A549 (cell line): ENCODE measurements at regions of chr14 and their contacts with region 1.

Region 1: DNA sequence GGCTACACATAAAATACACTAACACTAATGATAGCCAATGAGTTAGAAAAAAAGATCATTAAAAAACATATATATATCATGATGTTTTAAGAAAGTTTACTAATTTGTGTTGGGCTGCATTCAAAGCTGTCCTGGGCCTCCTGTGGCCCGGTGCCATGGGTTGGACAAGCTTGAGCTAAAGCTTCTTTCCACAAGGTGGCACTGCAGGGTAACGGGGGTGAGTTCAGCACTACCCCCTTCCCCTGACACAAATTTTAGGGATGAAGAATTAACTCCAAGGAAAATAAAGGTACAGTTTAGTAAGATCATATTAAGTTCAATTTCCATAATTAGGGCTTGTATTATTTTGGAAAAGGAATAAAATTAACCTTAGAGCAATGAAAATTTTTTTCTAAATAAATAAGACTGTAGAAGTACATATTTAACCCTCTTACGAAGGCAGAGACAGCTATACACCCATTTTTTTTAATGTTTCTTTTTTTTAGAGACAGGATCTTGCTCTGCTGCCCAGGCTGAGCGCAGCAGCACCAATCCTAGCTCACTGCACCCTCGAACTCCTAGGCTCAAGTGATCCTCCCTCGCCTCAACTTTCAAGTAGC is 38.9 kb downstream of the PPP1R13B start:
- DNase-seq: peak; percentile 55 to 70
- ATAC-seq: peak; percentile 92 to 98
- H3K4me3 ChIP-seq: no peak overlapping the region
- H3K27ac ChIP-seq: no peak overlapping the region
- H3K4me1 ChIP-seq: no peaks in the 10 kb centered on the region
- CTCF ChIP-seq: peak; percentile 93
- EP300 ChIP-seq: no peak
- POLR2A ChIP-seq: no peak
- RAD21 ChIP-seq: peak; percentile 94 to 95

Region 2: DNA sequence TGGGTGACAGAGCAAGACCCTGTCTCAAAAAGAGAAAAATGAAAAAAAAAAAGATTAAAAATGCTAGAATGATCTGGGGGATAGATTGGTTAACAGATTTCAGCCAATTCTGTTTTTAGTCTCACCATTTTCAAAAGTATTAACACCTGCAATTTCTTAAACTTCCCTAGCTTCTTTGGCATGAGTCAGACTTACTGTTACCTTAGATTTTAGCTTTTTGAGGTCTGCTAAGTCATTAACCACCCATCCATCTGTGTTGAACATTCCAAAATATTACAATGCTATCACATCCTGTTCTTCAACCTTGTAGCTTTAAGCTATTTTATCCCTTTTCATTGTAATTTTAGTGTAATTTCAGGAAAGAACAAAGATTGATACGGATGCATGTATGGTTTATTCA is 20.4 kb before region 1 on chr14:
- CTCF ChIA-PET with region 1: interaction called, 13 read pairs
- POLR2A ChIA-PET with region 1: no interaction called
- DNase-seq: no peak
- ATAC-seq: no peak
- H3K4me3 ChIP-seq: no peak overlapping the region
- H3K27ac ChIP-seq: no peak overlapping the region
- H3K4me1 ChIP-seq: no peaks in the 10 kb centered on the region
- CTCF ChIP-seq: no peak
- EP300 ChIP-seq: no peak
- POLR2A ChIP-seq: no peak
- RAD21 ChIP-seq: no peak

Region 3: DNA sequence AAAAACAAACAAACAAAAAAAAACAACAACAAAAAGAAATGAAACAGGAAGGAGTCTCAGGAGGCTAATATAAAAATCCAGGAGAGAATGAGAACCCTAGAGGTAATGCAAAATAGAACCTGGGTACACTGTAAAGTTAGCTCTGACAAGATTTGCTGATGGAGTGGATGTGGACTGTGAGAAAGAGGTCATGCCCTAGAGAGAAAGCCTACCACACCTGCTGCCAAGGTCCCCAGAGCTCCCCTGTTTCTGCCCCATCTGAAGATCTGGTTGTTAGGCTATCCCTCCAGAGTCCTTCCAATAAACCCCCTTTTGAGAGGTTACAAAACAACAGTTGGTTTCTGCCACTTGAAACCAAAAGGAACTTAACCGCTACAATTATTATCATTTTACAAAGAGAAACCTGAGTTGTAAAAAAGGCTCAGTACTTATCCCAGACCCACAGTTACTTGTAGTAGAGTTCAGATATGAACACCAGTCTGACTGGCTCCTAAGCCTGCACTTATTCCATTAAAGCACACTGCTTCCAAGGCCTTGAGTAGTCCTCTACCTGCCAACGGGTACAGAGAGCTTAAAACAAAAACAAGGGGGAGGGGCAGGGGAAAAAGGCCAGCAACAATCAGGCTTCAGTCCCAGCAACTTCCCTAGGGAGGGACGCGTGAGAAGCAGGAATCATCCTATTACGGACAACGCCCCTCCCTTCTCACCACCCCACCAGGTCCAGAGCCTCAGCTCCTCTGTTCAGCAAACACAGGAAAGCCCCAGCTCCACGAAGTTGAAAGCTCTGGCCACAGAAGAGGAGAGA is 11.2 kb after region 1 on chr14:
- CTCF ChIA-PET with region 1: interaction called, 27 read pairs
- POLR2A ChIA-PET with region 1: no interaction called
- DNase-seq: no peak
- ATAC-seq: peak in 1 of 2 experiments; percentile 45; a peak in 4 of 6 replicates
- H3K4me3 ChIP-seq: no peak overlapping the region
- H3K27ac ChIP-seq: no peak overlapping the region
- H3K4me1 ChIP-seq: no peaks in the 10 kb centered on the region; the same call in 2 of the 3 replicates
- CTCF ChIP-seq: no peak
- EP300 ChIP-seq: no peak
- POLR2A ChIP-seq: no peak
- RAD21 ChIP-seq: no peak

Region 4: GRCh38 chr14:103840014-103840413 is 31.5 kb after region 1 on chr14:
- CTCF ChIA-PET with region 1: interaction called, 11 read pairs
- POLR2A ChIA-PET with region 1: no interaction called
- DNase-seq: no peak
- ATAC-seq: no peak
- H3K4me3 ChIP-seq: no peak overlapping the region
- H3K27ac ChIP-seq: no peak overlapping the region
- H3K4me1 ChIP-seq: no peaks in the 10 kb centered on the region
- CTCF ChIP-seq: no peak
- EP300 ChIP-seq: no peak
- POLR2A ChIP-seq: no peak
- RAD21 ChIP-seq: no peak

Region 5: DNA sequence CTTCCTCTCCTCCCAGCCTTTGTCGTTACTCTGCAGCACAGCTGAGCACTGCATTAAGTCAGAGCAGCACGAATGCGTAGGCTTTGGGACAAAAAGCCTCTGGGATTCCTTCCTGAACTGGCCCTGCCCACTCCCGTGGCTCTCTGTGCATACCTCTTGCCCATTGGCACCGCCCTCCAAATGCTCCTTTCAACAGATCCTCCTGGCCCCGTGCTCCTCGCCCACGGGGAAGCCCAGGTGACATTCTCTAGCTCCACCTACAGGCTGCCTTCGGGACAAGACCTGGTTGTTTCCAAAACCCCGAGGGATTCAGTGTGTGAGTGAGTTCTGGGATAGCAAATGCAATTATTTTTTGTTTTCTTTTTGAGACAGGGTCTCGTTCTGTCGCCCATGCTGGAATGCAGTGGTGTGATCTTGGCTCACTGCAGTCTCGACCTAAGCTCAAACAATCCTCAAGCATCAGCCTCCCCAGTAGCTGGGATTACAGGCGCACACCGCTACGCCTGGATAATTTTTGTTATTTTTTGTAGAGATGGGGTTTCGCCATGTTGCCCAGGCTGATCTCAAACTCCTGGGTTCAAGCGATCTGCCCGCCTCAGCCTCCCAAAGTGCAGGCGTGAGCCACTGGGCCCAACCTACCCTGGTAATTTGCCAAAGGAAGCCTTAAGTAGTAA is 101.9 kb after region 1 on chr14:
- CTCF ChIA-PET with region 1: interaction called, 120 read pairs
- POLR2A ChIA-PET with region 1: interaction called, 3 read pairs
- DNase-seq: peak; percentile 82 to 89
- ATAC-seq: peak; percentile 94 to 96
- H3K4me3 ChIP-seq: no peak overlapping the region
- H3K27ac ChIP-seq: 0 out of 6 replicates have a peak overlapping the region, but pooled peaks of 1 of the 2 experiments have one; percentile 39
- H3K4me1 ChIP-seq: peaks cover 3% of the 10 kb centered on the region; the same call in 1 of the 3 replicates
- CTCF ChIP-seq: peak; percentile 82
- EP300 ChIP-seq: no peak
- POLR2A ChIP-seq: no peak
- RAD21 ChIP-seq: peak; percentile 82 to 89

Region 6: GRCh38 chr14:103920981-103921854 is 112.7 kb after region 1 on chr14:
- CTCF ChIA-PET with region 1: interaction called, 120 read pairs
- POLR2A ChIA-PET with region 1: no interaction called
- DNase-seq: peak; percentile 87 to 93
- ATAC-seq: peak; percentile 99 to 100
- H3K4me3 ChIP-seq: peak overlapping the region; percentile 63
- H3K27ac ChIP-seq: peak overlapping the region; percentile 81 to 93
- H3K4me1 ChIP-seq: peaks cover 10% of the 10 kb centered on the region
- CTCF ChIP-seq: peak; percentile 90
- EP300 ChIP-seq: no peak
- POLR2A ChIP-seq: peak; percentile 80
- RAD21 ChIP-seq: peak; percentile 3 to 37; a peak in 2 of 5 replicates

Region 7: DNA sequence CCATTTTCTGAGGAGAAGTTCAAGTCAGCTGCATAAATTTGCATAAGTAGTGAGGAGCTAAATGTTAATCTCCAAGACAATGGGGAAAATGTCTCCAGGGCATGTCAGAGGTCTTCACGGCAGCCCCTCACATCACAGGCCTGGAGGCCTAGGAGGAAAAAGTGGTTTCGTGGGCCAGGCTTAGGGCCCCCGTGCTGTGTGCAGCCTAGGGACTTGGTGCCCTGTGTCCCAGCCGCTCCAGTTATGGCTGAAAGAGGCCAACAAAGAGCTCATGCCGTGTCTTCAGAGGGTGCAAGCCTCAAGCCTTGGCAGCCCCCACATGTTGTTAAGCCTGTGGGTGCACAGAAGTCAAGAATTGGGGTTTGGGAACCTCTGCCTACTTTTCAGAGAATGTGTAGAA is 175.7 kb after region 1 on chr14:
- CTCF ChIA-PET with region 1: interaction called, 101 read pairs
- POLR2A ChIA-PET with region 1: no interaction called
- DNase-seq: no peak
- ATAC-seq: no peak
- H3K4me3 ChIP-seq: no peak overlapping the region
- H3K27ac ChIP-seq: no peak overlapping the region
- H3K4me1 ChIP-seq: no peaks in the 10 kb centered on the region
- CTCF ChIP-seq: no peak
- EP300 ChIP-seq: no peak
- POLR2A ChIP-seq: no peak
- RAD21 ChIP-seq: no peak